ENCODE measurements at regions of chr3 and their contacts with region 1.

Region 1: DNA sequence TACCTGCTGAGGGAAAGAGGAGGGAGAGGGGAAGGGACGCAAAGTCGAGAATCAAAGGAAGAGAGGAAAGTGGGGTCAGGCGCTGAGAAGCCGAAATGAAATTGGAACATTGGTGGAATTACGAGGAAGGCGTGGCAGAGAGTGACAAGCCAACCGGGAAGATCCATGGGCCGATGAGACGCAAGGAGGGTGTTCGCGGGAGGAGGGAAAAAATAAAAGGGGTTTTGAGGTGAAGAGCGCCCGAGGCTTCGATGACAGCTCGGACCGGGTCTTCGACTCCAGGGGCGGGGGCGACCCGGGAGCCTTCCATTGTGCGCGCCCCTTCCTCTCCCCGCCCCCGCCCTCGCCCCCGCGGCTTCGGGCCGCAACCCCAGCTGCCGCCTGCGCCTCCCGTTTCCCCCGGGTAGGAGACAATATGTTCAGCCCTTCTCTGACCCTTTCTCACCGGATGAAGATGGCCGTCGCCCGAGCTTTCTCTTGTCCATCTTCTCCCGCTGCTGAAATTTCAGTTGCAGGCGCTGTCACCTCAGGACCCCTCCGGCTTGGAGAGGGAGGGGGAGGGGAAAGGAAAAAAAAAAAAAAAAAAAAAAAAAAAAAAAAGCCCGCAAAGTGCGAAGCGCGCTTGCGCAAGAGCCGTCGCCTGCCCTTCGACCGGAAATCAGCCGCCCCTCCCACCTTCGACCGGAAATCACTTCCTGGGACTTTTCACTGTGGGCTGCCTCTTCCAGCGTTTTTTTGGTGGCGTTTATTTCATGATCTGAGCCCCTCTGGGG is at the start of gene SENP7:
- DNase-seq: peak; percentile 55 to 82 (median 76)
- ATAC-seq: peak; percentile 74
- H3K4me3 ChIP-seq: peak within 1 kb of the TSS; percentile 84
- H3K4me3 Mint-ChIP-seq: peak within 1 kb of the TSS; percentile 98 to 100 (median 100)
- H3K27ac ChIP-seq: peak within 1 kb of the TSS; percentile 92
- H3K27ac Mint-ChIP-seq: peak within 1 kb of the TSS; percentile 96 to 100 (median 98)
- H3K4me1 ChIP-seq: peaks cover 24 to 41% of the 10 kb centered on the region in 2 donors
- H3K4me1 Mint-ChIP-seq: peaks cover 35 to 79% (median 70%) of the 10 kb centered on the region in 7 donors
- H3K27me3 ChIP-seq: no peaks in the 10 kb centered on the region
- H3K27me3 Mint-ChIP-seq: peaks cover 0 to 4% (median 0%) of the 10 kb centered on the region in 5 donors
- total RNA-seq, gene SENP7: 28.8 to 79.0 (median 49.5) TPM

Region 2: DNA sequence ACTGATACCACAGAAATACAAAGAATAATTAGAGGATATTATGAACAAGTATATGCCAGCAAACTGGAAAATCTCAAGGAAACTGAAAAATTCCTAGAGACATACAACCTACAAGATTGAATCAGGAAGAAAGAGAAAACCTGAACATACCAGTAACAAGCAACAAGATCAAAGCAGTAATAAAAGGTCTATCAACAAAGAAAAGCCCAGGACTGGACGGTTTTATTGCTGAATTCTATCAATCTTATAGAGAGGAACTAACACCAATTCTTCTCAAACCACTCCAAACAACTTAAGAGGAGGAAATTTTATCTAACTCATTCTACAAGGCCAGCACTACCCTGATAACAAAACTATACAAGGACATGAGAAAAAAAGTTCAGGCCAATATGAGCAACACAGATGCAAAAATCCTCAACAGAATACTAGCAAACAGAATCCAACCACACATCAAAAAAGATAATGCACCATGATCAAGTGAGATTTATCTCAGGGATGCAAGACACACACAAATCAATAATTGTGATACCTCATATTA is 121.3 kb before region 1 on chr3:
- CTCF ChIA-PET with region 1: interaction called, 4 read pairs
- POLR2A ChIA-PET with region 1: interaction called, 3 read pairs
- intact Hi-C with region 1: loop called in 1 of 2 experiments (anchors 2 kb)
- DNase-seq: no peak
- ATAC-seq: no peak
- H3K4me3 ChIP-seq: no peak overlapping the region
- H3K4me3 Mint-ChIP-seq: peak overlapping the region in 1 of 10 donors; percentile 12
- H3K27ac ChIP-seq: no peak overlapping the region
- H3K27ac Mint-ChIP-seq: peak overlapping the region in 7 of 9 donors; percentile 5 to 71 (median 43)
- H3K4me1 ChIP-seq: peaks cover 0 to 12% of the 10 kb centered on the region in 2 donors
- H3K4me1 Mint-ChIP-seq: peaks cover 20 to 58% (median 49%) of the 10 kb centered on the region in 7 donors
- H3K27me3 ChIP-seq: no peaks in the 10 kb centered on the region
- H3K27me3 Mint-ChIP-seq: no peaks in the 10 kb centered on the region

Region 3: GRCh38 chr3:101497803-101498202 is 15.0 kb before region 1 on chr3:
- CTCF ChIA-PET with region 1: no interaction called
- POLR2A ChIA-PET with region 1: interaction called, 9 read pairs
- intact Hi-C with region 1: loop called in 1 of 2 experiments (anchors 2 kb)
- DNase-seq: no peak
- ATAC-seq: no peak
- H3K4me3 ChIP-seq: no peak overlapping the region
- H3K4me3 Mint-ChIP-seq: no peak overlapping the region
- H3K27ac ChIP-seq: no peak overlapping the region
- H3K27ac Mint-ChIP-seq: peak overlapping the region in 3 of 9 donors; percentile 45 to 80 (median 60)
- H3K4me1 ChIP-seq: no peaks in the 10 kb centered on the region
- H3K4me1 Mint-ChIP-seq: peaks cover 7 to 75% (median 66%) of the 10 kb centered on the region in 7 donors
- H3K27me3 ChIP-seq: no peaks in the 10 kb centered on the region
- H3K27me3 Mint-ChIP-seq: no peaks in the 10 kb centered on the region

Region 4: GRCh38 chr3:101531473-101532086 is 18.7 kb after region 1 on chr3:
- CTCF ChIA-PET with region 1: no interaction called
- POLR2A ChIA-PET with region 1: interaction called, 27 read pairs
- intact Hi-C with region 1: no loop called
- DNase-seq: peak in 2 of 9 donors; percentile 18 to 31
- ATAC-seq: peak; percentile 52
- H3K4me3 ChIP-seq: no peak overlapping the region
- H3K4me3 Mint-ChIP-seq: peak overlapping the region; percentile 29 to 70 (median 59)
- H3K27ac ChIP-seq: peak overlapping the region; percentile 57
- H3K27ac Mint-ChIP-seq: peak overlapping the region; percentile 8 to 95 (median 93)
- H3K4me1 ChIP-seq: peaks cover 6 to 32% of the 10 kb centered on the region in 2 donors
- H3K4me1 Mint-ChIP-seq: peaks cover 22 to 57% (median 46%) of the 10 kb centered on the region in 7 donors
- H3K27me3 ChIP-seq: no peaks in the 10 kb centered on the region
- H3K27me3 Mint-ChIP-seq: no peaks in the 10 kb centered on the region

Region 5: GRCh38 chr3:102646557-102646956 is 1133.7 kb after region 1 on chr3:
- CTCF ChIA-PET with region 1: no interaction called
- POLR2A ChIA-PET with region 1: no interaction called
- intact Hi-C with region 1: no loop called
- DNase-seq: no peak
- ATAC-seq: no peak
- H3K4me3 ChIP-seq: no peak overlapping the region
- H3K4me3 Mint-ChIP-seq: no peak overlapping the region
- H3K27ac ChIP-seq: no peak overlapping the region
- H3K27ac Mint-ChIP-seq: no peak overlapping the region
- H3K4me1 ChIP-seq: no peaks in the 10 kb centered on the region
- H3K4me1 Mint-ChIP-seq: no peaks in the 10 kb centered on the region
- H3K27me3 ChIP-seq: no peaks in the 10 kb centered on the region
- H3K27me3 Mint-ChIP-seq: peaks cover 0 to 25% (median 14%) of the 10 kb centered on the region in 5 donors

Region 6: GRCh38 chr3:102673271-102674115 is 1160.7 kb after region 1 on chr3:
- CTCF ChIA-PET with region 1: no interaction called
- POLR2A ChIA-PET with region 1: no interaction called
- intact Hi-C with region 1: no loop called
- DNase-seq: peak; percentile 3 to 52 (median 37)
- ATAC-seq: peak; percentile 70
- H3K4me3 ChIP-seq: no peak overlapping the region
- H3K4me3 Mint-ChIP-seq: peak overlapping the region in 1 of 10 donors; percentile 26
- H3K27ac ChIP-seq: no peak overlapping the region
- H3K27ac Mint-ChIP-seq: no peak overlapping the region
- H3K4me1 ChIP-seq: no peaks in the 10 kb centered on the region
- H3K4me1 Mint-ChIP-seq: peaks cover 0 to 4% (median 0%) of the 10 kb centered on the region in 7 donors
- H3K27me3 ChIP-seq: peaks cover 0 to 4% of the 10 kb centered on the region in 2 donors
- H3K27me3 Mint-ChIP-seq: peaks cover 0 to 41% (median 27%) of the 10 kb centered on the region in 5 donors